Activated CD4-positive, alpha-beta T cell treated with anti-CD3 and anti-CD28 coated beads, Interleukin-2, amount 10 ng/mL, durations not matched to agents 24 days and 14 days (primary cell): ENCODE measurements at regions of chr6 and their contacts with region 1.

Region 1: GRCh38 chr6:108627692-108628550 is 67.2 kb downstream of the FOXO3 start:
- DNase-seq: no peak
- H3K4me3 Mint-ChIP-seq: no peak overlapping the region
- H3K27ac Mint-ChIP-seq: no peak overlapping the region
- H3K4me1 Mint-ChIP-seq: peaks cover 27% of the 10 kb centered on the region
- H3K27me3 Mint-ChIP-seq: no peaks in the 10 kb centered on the region

Region 2: DNA sequence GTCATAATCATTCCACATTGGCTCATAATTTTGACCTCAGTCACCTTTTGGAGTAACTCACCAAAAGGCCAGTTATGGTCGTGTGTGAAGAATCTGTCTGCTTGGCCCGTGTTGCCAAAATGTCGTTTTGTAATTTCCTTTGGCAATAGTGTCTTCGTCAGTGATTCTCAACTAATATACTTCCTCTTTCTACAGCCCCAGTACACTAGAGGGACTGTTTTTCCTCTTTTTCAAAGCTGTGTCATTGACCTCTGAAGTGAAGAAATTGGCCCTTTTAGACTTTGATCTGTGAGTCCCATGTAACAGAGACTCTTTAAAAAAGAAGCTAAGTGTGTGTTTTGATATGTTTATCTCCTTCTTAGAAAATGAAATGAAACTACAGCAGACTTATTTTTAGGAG is 62.0 kb before region 1 on chr6:
- intact Hi-C with region 1: loop called (anchors 2 kb)
- DNase-seq: no peak
- H3K4me3 Mint-ChIP-seq: no peak overlapping the region
- H3K27ac Mint-ChIP-seq: no peak overlapping the region
- H3K4me1 Mint-ChIP-seq: peaks cover 41% of the 10 kb centered on the region
- H3K27me3 Mint-ChIP-seq: peaks cover 34% of the 10 kb centered on the region

Region 3: GRCh38 chr6:108589287-108589791 is 38.6 kb before region 1 on chr6:
- intact Hi-C with region 1: loop called (anchors 5 kb)
- DNase-seq: no peak
- H3K4me3 Mint-ChIP-seq: no peak overlapping the region
- H3K27ac Mint-ChIP-seq: no peak overlapping the region
- H3K4me1 Mint-ChIP-seq: peaks cover 22% of the 10 kb centered on the region
- H3K27me3 Mint-ChIP-seq: peaks cover 8% of the 10 kb centered on the region

Region 4: GRCh38 chr6:108831104-108831503 is 203.2 kb after region 1 on chr6:
- intact Hi-C with region 1: no loop called
- DNase-seq: no peak
- H3K4me3 Mint-ChIP-seq: no peak overlapping the region
- H3K27ac Mint-ChIP-seq: no peak overlapping the region
- H3K4me1 Mint-ChIP-seq: peaks cover 4% of the 10 kb centered on the region
- H3K27me3 Mint-ChIP-seq: peaks cover 20% of the 10 kb centered on the region